Activated B cell treated with CpG ODN at 0.5 μM for 24 hours (primary cell): ENCODE measurements at regions of chr20 and their contacts with region 1.

Region 1: GRCh38 chr20:31861346-31862156 is 8.8 kb downstream of the DUSP15 start:
- DNase-seq: peak; percentile 62
- ATAC-seq: peak; percentile 88
- H3K4me3 Mint-ChIP-seq: peak overlapping the region; percentile 56
- H3K27ac Mint-ChIP-seq: no peak overlapping the region
- H3K4me1 Mint-ChIP-seq: peaks cover 18% of the 10 kb centered on the region
- H3K27me3 Mint-ChIP-seq: peaks cover 6% of the 10 kb centered on the region
- CTCF ChIP-seq: no peak

Region 2: DNA sequence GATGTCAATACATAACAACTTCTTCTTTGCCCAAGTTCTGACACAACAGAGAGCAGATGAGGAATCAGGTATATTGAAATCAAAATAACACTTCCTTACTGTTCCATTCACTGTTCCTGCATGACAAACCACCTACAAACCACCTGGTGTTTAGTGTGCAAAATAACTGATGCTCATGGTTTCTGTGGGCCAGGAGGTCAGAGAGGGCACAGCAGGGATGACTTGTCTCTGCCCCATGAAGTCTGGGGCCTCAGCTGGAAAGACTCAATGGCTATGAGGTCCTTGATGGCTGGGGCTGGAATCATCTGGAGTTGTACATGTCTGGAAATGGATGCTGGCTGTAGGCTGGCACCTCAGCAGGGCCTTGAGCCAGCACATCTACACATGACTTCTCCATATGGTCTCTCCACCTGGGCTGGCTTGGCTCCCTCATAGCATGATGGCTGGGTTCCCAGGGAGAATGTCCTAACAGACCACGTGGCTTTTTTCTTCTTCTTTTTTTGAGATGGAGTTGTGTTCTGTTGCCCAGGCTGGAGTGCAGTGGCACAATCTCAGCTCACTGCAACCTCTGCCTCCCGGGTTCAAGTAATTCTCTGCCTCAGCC is 231.3 kb before region 1 on chr20:
- CTCF ChIA-PET with region 1: no interaction called
- POLR2A ChIA-PET with region 1: interaction called, 12 read pairs
- intact Hi-C with region 1: no loop called
- DNase-seq: no peak
- ATAC-seq: no peak
- H3K4me3 Mint-ChIP-seq: no peak overlapping the region
- H3K27ac Mint-ChIP-seq: no peak overlapping the region
- H3K4me1 Mint-ChIP-seq: peaks cover 6% of the 10 kb centered on the region
- H3K27me3 Mint-ChIP-seq: no peaks in the 10 kb centered on the region
- CTCF ChIP-seq: no peak

Region 3: GRCh38 chr20:31712564-31713311 is 148.8 kb before region 1 on chr20:
- CTCF ChIA-PET with region 1: no interaction called
- POLR2A ChIA-PET with region 1: no interaction called
- intact Hi-C with region 1: no loop called
- DNase-seq: no peak
- ATAC-seq: no peak
- H3K4me3 Mint-ChIP-seq: no peak overlapping the region
- H3K27ac Mint-ChIP-seq: no peak overlapping the region
- H3K4me1 Mint-ChIP-seq: peaks cover 68% of the 10 kb centered on the region
- H3K27me3 Mint-ChIP-seq: no peaks in the 10 kb centered on the region
- CTCF ChIP-seq: no peak

Region 4: DNA sequence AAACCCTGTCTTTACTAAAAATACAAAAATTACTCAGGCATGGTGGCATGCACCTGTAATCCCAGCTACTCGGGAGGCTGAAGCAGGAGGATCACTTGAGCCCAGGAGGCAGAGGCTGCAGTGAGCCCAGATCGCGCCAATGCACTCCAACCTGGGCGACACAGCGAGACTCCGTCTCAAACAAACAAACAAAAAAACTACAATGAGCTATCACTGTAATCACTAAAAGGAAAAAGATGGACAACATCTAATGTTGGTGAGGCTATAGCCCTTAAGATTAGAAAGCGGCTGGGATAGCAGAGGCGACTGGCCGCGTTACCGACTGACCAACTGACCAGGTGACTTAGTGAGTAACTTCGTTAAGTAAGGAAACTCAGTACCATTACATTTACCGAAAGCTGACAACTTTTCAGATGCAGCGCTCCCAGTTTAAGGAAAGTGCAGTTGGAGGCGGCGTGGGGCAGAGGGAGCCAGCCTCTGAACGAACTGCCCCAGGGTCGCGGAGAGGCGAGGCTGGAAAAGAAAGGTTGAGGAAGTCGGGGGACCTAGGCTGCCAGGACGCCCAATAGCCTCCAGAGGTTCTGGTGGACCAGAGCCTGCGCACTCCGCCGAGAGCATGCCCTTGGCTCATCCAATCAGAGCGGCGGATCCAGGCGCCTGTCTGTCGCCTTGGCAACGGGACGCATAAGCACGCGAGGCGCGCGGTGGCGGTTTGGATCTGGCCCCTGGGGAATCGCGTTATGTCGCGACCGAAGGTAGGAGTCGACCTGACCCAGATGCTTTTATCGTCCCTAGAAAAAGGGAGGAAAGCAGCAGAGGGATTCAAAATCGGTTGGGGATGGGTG is 17.8 kb after region 1 on chr20:
- CTCF ChIA-PET with region 1: interaction called, 3 read pairs
- POLR2A ChIA-PET with region 1: interaction called, 9 read pairs
- intact Hi-C with region 1: loop called (anchors 1 kb)
- DNase-seq: peak; percentile 81
- ATAC-seq: peak; percentile 87
- H3K4me3 Mint-ChIP-seq: peak overlapping the region; percentile 93
- H3K27ac Mint-ChIP-seq: peak overlapping the region; percentile 93
- H3K4me1 Mint-ChIP-seq: peaks cover 14% of the 10 kb centered on the region
- H3K27me3 Mint-ChIP-seq: no peaks in the 10 kb centered on the region
- CTCF ChIP-seq: no peak

Region 5: GRCh38 chr20:31894980-31895675 is 33.6 kb after region 1 on chr20:
- CTCF ChIA-PET with region 1: no interaction called
- POLR2A ChIA-PET with region 1: interaction called, 6 read pairs
- intact Hi-C with region 1: loop called (anchors 5 kb)
- DNase-seq: peak; percentile 25
- ATAC-seq: peak; percentile 100
- H3K4me3 Mint-ChIP-seq: peak overlapping the region; percentile 28
- H3K27ac Mint-ChIP-seq: peak overlapping the region; percentile 86
- H3K4me1 Mint-ChIP-seq: peaks cover 15% of the 10 kb centered on the region
- H3K27me3 Mint-ChIP-seq: no peaks in the 10 kb centered on the region
- CTCF ChIP-seq: no peak

Region 6: DNA sequence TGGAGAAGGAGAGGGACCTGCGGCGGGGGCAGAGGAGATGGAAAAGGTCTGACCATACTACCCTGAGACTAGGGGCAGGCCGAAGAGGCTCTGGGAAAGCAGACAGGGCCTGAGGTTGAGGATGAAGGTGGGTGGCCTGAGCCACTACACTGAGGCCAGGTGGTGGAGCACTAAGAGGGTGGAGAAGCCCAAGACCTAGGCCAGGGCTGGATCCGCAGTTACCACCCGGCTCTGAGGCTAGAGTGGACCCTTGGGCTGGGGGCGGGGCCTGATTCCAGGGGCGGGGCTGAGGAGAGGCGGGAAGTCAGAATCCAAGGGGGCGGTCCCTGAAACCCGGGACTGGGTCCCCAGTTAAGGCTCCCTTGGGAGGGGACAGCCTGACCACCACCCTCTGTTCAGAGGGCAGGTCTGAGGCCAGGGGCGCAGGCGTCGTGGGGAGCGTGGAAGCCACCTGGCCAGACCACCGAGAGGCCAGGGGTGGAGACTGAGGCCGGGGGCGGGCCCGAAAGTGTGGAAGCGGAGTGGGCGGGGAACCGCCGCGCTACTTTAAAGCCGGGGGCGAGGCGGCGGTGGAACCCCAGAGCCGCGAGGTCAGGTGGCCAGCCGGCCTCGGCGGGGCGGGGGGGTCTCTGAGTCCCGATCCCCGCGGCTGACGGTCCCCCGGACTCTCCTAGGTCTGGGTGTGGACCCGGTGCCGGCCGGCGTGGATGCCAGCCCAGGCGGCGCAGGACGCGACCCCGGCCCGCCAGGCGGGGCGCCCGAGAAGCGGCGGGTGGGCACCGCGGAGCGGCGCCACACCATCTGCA is 156.9 kb after region 1 on chr20:
- CTCF ChIA-PET with region 1: no interaction called
- POLR2A ChIA-PET with region 1: no interaction called
- intact Hi-C with region 1: loop called (anchors 2 kb)
- DNase-seq: peak; percentile 55
- ATAC-seq: peak; percentile 71
- H3K4me3 Mint-ChIP-seq: peak overlapping the region; percentile 85
- H3K27ac Mint-ChIP-seq: no peak overlapping the region
- H3K4me1 Mint-ChIP-seq: peaks cover 23% of the 10 kb centered on the region
- H3K27me3 Mint-ChIP-seq: peaks cover 56% of the 10 kb centered on the region
- CTCF ChIP-seq: no peak